ENCODE measurements at regions of chr15 and their contacts with region 1.

Region 1: DNA sequence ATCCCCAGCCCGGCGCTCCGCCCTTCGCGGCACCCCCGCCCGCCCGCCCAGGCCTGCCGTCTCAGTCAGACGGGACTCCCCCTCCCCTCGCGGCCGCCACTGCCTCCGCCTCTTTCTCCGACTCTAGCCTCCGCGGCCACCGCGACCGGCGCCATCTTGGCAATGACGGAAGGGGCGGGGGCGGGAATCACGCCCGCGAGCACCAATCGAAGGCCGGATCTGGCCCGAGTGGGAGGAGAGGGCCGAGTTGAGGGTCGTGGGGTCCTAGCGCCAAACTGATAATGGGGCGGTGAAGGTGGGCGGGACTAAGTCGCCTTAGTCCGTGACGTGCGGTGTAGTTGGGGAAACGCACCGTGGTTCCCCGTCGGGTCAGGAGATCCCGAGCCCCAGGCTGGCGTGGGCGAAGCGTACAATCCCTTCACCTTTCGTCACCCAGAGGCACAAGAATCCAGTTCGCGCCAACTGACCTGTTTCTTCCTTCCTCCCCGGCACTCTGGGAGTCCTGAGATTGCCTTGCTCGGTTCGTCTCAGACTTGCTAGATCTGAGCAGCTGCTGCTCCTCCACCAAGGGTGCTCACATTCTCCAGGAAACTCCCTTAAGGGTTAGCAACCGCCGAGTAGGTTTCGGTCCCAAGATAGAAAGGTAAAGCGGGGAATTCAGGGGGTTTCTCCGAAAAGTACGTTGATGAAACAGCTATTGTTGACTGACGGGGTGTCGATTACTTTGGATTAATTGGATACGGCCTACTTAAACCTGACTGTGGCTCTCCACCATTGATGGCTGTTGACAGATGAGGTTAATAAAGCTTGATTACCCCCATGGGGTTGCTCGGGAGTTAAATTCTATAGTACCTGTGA is at the start of gene DENND4A:
- DNase-seq: peak; percentile 98
- ATAC-seq: peak; percentile 85
- H3K4me3 Mint-ChIP-seq: peak within 1 kb of the TSS; percentile 90
- H3K27ac Mint-ChIP-seq: peak within 1 kb of the TSS; percentile 96
- H3K4me1 Mint-ChIP-seq: peaks cover 43% of the 10 kb centered on the region
- H3K27me3 Mint-ChIP-seq: no peaks in the 10 kb centered on the region
- total RNA-seq, gene DENND4A: 50.4 to 56.7 TPM

Region 2: DNA sequence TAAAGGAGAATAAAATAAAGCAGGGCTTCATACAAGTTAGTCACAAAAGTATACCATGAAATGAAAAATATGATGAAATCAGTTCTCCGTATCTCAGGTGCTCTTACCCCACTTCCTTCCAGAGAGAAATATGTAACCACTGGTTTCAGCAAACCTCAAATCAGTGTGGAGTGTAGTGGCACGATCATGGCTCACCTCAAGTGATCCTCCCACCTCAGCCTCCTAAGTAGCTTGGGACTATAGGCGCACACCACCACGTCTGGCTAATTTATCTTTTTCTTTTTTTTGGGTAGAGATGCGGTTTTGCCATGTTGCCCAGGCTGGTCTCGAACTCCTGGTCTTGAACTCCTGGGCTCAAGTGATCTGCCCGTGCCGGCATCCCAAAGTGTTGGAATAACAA is 24.5 kb before region 1 on chr15:
- POLR2A ChIA-PET with region 1: interaction called, 13 read pairs
- DNase-seq: no peak
- ATAC-seq: peak; percentile 88
- H3K4me3 Mint-ChIP-seq: no peak overlapping the region
- H3K27ac Mint-ChIP-seq: peak overlapping the region; percentile 34
- H3K4me1 Mint-ChIP-seq: peaks cover 34% of the 10 kb centered on the region
- H3K27me3 Mint-ChIP-seq: no peaks in the 10 kb centered on the region

Region 3: GRCh38 chr15:65804252-65804931 is 12.0 kb after region 1 on chr15:
- POLR2A ChIA-PET with region 1: interaction called, 59 read pairs
- DNase-seq: no peak
- ATAC-seq: no peak
- H3K4me3 Mint-ChIP-seq: no peak overlapping the region
- H3K27ac Mint-ChIP-seq: no peak overlapping the region
- H3K4me1 Mint-ChIP-seq: peaks cover 19% of the 10 kb centered on the region
- H3K27me3 Mint-ChIP-seq: no peaks in the 10 kb centered on the region

Region 4: DNA sequence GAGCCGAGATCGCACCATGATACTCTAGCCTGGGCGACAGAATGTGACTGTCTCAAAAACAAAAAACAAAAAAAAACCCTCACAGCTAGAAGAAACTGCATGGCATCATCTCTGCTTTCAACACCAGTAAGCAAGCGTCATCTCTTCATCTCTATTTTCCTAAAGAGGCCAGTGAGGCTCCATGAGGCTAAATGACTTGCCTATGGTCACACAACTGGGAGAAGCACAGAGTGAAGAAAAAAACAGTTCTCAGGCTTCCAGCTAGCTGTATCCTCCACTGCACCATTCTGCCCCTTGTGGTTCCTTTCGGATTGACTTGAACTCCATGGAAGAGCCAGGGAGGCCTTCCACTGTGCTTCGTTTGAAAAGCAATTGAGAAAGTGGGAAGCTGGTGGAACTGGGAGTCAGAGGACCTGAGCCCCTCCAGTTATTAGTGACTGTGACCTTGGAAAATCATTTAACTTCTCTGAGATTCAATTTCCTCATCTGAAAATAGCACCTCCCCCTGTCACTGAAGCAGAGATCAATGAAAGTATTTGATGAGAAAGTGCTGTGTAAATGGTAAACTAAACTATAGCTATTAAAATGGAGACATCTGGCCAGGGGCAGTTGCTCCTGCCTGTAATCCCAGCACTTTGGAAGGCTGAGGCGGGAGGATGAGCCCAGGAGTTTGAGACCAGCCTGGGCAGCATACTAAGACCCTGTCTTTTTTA is 31.8 kb after region 1 on chr15:
- POLR2A ChIA-PET with region 1: interaction called, 84 read pairs
- DNase-seq: no peak
- ATAC-seq: no peak
- H3K4me3 Mint-ChIP-seq: no peak overlapping the region
- H3K27ac Mint-ChIP-seq: no peak overlapping the region
- H3K4me1 Mint-ChIP-seq: peaks cover 50% of the 10 kb centered on the region
- H3K27me3 Mint-ChIP-seq: no peaks in the 10 kb centered on the region

Region 5: GRCh38 chr15:65869127-65869953 is 77.0 kb after region 1 on chr15 and contains the start of gene RAB11A:
- POLR2A ChIA-PET with region 1: interaction called, 23 read pairs
- DNase-seq: peak; percentile 94
- ATAC-seq: peak; percentile 93
- H3K4me3 Mint-ChIP-seq: peak within 1 kb of the TSS; percentile 100
- H3K27ac Mint-ChIP-seq: peak within 1 kb of the TSS; percentile 98
- H3K4me1 Mint-ChIP-seq: peaks cover 18% of the 10 kb centered on the region
- H3K27me3 Mint-ChIP-seq: peaks cover 3% of the 10 kb centered on the region
- total RNA-seq, gene RAB11A: 141 to 151 TPM